Thyroid gland (tissue), 4 donors: ENCODE measurements at regions of chr9 and their contacts with region 1.

Region 1: DNA sequence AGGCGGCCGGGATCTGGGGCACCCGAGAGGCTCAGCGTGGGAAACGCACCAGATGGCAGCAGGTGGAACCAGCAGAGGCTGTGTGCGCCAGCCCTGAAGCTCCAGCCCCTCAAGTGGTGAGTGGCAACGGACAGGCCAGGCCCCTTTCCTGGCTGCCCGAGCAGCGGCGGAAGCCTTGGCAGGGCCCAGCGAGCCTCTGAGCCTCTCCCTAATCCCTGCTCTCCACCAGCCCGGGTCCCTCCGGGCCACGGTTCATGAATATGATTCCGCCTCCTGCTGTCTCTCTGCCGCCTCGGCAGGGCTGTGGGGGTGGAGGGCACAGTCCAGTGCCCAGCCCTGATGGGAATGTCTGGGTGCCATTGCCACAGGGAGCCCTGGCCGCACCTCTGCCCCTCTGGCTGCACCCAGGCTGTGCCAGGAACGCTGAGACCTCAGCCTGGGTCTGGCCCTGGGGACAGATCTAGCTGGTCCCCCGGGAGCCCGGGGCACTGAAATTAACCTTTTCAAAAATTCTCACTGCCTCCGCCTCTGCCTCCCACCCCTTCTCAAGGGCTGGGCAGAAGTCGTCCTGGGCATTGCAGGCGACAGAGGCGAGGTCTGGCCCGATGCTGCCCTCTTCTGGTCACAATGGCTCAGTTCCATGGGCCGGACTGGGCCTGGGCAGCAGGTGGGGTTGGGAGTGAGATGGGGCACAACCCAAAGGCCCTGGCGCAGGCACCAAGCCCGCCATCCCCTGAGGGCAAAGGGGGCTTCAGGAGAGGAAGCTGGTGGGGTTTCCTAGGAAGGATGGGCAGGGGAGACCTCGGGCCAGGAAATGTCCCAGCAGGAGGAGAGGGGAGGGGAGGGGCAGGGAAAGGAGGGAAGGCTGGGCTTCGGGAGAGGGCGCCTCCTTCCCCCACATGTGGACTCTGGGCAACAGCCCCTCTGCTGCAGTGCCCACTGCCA is 20.3 kb downstream of the CCDC187 start:
- DNase-seq: peak; percentile 85 to 86
- H3K4me3 ChIP-seq: peak overlapping the region in 1 of 3 donors; percentile 13
- H3K27ac ChIP-seq: peak overlapping the region in 2 of 3 donors; percentile 11 to 35
- H3K4me1 ChIP-seq: peaks cover 5 to 17% of the 10 kb centered on the region in 2 donors
- H3K27me3 ChIP-seq: no peaks in the 10 kb centered on the region
- CTCF ChIP-seq: peak; percentile 66 to 88 (median 77)
- POLR2A ChIP-seq: no peak

Region 2: GRCh38 chr9:136031741-136032730 is 251.5 kb before region 1 on chr9:
- intact Hi-C with region 1: no loop called
- DNase-seq: no peak
- H3K4me3 ChIP-seq: no peak overlapping the region
- H3K27ac ChIP-seq: no peak overlapping the region
- H3K4me1 ChIP-seq: no peaks in the 10 kb centered on the region
- H3K27me3 ChIP-seq: no peaks in the 10 kb centered on the region
- CTCF ChIP-seq: no peak
- POLR2A ChIP-seq: no peak

Region 3: GRCh38 chr9:136143216-136144001 is 140.2 kb before region 1 on chr9:
- intact Hi-C with region 1: loop called (anchors 10 kb)
- DNase-seq: peak; percentile 15 to 30
- H3K4me3 ChIP-seq: no peak overlapping the region
- H3K27ac ChIP-seq: no peak overlapping the region
- H3K4me1 ChIP-seq: peaks cover 0 to 14% of the 10 kb centered on the region in 2 donors
- H3K27me3 ChIP-seq: no peaks in the 10 kb centered on the region
- CTCF ChIP-seq: peak in 2 of 6 experiments; percentile 6 to 24
- POLR2A ChIP-seq: no peak

Region 4: GRCh38 chr9:136170006-136170901 is 113.3 kb before region 1 on chr9:
- intact Hi-C with region 1: loop called (anchors 10 kb)
- DNase-seq: peak; percentile 11 to 16
- H3K4me3 ChIP-seq: no peak overlapping the region
- H3K27ac ChIP-seq: no peak overlapping the region
- H3K4me1 ChIP-seq: no peaks in the 10 kb centered on the region
- H3K27me3 ChIP-seq: no peaks in the 10 kb centered on the region
- CTCF ChIP-seq: peak in 5 of 6 experiments; percentile 12 to 51 (median 31)
- POLR2A ChIP-seq: no peak